ENCODE measurements at regions of chr6 and their contacts with region 1.

Region 1: GRCh38 chr6:71383901-71384489 is 95.4 kb downstream of the OGFRL1 start:
- DNase-seq: no peak
- ATAC-seq: no peak

Region 2: GRCh38 chr6:71444222-71444621 is 60.2 kb after region 1 on chr6:
- intact Hi-C with region 1: loop called (anchors 2 kb)
- DNase-seq: no peak
- ATAC-seq: peak; percentile 56

Region 3: GRCh38 chr6:71510057-71510713 is 126.2 kb after region 1 on chr6:
- intact Hi-C with region 1: loop called (anchors 1 kb)
- DNase-seq: no peak
- ATAC-seq: peak; percentile 74

Measured in Right ventricle myocardium inferior (tissue), 1 donor.